ENCODE measurements at regions of chr12 and their contacts with region 1.

Region 1: GRCh38 chr12:8078398-8078797 is 3.7 kb upstream of the NECAP1 start:
- DNase-seq: peak; percentile 63
- H3K4me3 ChIP-seq: no peak overlapping the region
- H3K27ac ChIP-seq: no peak overlapping the region
- H3K27me3 ChIP-seq: no peaks in the 10 kb centered on the region
- CTCF ChIP-seq: peak; percentile 63

Region 2: DNA sequence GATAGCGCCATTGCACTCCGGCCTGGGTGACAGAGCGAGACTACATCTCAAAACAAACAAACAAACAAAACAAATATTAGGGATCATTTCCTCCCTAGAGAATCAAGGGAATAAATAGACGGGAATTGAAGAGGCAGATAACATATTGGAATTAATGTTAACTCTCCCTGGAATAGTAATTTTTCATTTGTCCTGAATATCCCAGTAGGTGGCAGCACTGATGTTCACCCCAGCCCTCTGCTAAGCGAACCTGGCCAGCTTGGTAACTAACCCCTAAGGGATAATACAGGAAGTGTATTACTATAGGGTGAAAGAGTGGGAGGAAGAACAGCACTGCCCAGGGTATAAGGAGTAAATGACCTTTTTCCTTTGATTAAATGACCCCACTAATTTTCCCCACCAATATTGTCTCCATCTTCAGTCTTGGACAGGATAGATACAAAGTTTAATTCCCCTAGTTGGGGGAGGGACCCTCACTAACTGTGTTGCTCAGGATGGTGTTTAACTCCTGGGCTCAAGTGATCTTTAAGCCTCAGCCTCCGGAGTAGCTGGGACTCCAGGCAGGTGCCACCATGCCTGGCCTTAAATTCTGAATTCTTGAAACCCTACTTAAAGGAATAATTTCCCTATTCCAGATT is 246.2 kb before region 1 on chr12:
- CTCF ChIA-PET with region 1: interaction called, 12 read pairs
- POLR2A ChIA-PET with region 1: no interaction called
- DNase-seq: peak; percentile 27
- H3K4me3 ChIP-seq: no peak overlapping the region
- H3K27ac ChIP-seq: no peak overlapping the region
- H3K27me3 ChIP-seq: no peaks in the 10 kb centered on the region
- CTCF ChIP-seq: peak; percentile 68

Region 3: DNA sequence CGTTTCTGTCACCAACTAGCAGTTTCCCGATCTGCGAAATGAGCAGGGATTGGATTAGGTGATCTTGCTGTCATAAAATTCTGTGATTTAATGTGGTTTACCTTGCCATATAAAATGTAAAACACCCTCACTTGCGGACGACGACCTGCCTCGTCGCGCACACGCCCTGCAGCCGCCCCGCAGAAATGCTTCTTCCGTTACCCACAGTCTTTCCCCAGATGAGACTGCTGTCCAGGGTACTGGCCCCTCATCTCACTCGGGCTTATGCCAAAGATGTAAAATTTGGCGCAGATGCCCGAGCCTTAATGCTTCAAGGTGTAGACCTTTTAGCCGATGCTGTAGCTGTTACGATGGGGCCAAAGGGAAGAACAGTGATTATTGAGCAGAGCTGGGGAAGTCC is 63.6 kb before region 1 on chr12:
- CTCF ChIA-PET with region 1: no interaction called
- POLR2A ChIA-PET with region 1: no interaction called
- DNase-seq: no peak
- H3K4me3 ChIP-seq: no peak overlapping the region
- H3K27ac ChIP-seq: no peak overlapping the region
- H3K27me3 ChIP-seq: peaks cover 18% of the 10 kb centered on the region
- CTCF ChIP-seq: no peak

Region 4: DNA sequence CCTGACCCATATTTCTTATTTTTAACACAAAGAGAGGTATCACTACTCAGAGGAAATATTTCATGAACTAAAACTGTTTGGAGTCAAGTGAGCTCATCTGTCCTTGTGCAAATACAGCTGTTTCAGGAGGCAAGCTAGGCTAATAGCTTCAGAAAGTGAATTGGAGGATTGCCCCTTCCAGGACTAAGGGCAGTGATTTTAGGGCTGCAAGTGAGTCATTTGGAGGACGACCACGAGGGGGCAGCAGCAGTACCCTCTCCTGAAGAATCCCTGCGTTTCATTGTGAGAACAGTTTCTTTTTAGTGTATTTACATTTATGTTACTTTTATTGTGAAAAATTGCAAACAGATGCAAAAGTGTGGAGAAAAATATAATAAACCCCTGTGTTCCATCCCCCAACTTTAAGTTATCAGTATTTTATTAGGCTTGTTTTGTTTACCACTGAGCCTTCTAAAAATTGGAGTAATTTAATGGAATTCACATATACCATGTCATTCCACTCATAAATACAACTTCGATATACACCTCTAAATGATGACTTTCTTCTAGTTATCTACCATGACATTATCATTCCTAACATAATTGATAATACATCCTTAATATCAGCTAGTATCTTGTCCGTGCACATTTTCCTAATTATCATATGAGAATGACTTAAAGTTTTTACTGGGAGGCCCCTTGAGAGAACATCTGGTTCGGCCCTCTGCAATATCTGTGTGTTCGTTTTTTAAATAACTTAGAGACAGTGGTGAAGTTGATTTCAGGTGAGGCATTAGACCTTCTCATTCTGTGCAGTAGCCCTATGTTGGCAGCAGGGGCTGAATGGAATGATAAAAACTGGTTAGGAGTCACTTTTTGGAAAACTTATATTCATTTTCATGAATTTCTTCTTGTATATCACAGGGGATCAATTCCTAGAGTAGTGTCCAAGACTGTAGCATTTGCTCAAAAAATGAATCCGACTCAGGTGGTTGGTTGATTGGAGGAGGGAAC is 32.1 kb before region 1 on chr12:
- CTCF ChIA-PET with region 1: interaction called, 113 read pairs
- POLR2A ChIA-PET with region 1: no interaction called
- DNase-seq: peak; percentile 82
- H3K4me3 ChIP-seq: no peak overlapping the region
- H3K27ac ChIP-seq: no peak overlapping the region
- H3K27me3 ChIP-seq: no peaks in the 10 kb centered on the region
- CTCF ChIP-seq: peak; percentile 94

Region 5: DNA sequence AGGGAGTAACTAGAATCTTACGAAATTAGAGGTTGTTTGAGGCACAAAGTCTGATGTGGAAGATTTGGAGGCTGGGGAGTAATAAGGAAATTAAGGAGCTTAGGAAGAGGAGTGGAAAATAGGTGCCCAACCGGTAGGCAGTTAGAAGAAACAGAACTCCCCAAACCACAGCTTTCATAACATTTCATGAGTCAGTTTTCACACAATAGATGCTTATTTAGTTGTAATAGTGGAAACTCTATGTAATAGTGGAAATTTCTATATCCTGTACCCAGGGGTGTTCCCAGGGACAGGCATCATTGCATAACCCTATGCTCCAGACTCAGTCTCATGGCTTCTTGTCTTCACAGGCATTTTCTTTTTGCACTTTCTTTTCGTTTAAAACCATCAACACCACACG is 20.6 kb before region 1 on chr12:
- CTCF ChIA-PET with region 1: interaction called, 15 read pairs
- POLR2A ChIA-PET with region 1: interaction called, 3 read pairs
- DNase-seq: no peak
- H3K4me3 ChIP-seq: no peak overlapping the region
- H3K27ac ChIP-seq: no peak overlapping the region
- H3K27me3 ChIP-seq: no peaks in the 10 kb centered on the region
- CTCF ChIP-seq: no peak

Region 6: GRCh38 chr12:8065991-8066594 is 12.3 kb before region 1 on chr12 and contains the start of gene C3AR1:
- CTCF ChIA-PET with region 1: interaction called, 10 read pairs
- POLR2A ChIA-PET with region 1: interaction called, 4 read pairs
- DNase-seq: no peak
- H3K4me3 ChIP-seq: no peak within 1 kb of the TSS
- H3K27ac ChIP-seq: no peak within 1 kb of the TSS
- H3K27me3 ChIP-seq: no peaks in the 10 kb centered on the region
- CTCF ChIP-seq: no peak
- polyA plus RNA-seq, gene C3AR1: 0.52 and 0.71 TPM in 2 replicates

Region 7: GRCh38 chr12:8226355-8226754 is 148.0 kb after region 1 on chr12:
- CTCF ChIA-PET with region 1: interaction called, 15 read pairs
- POLR2A ChIA-PET with region 1: no interaction called
- DNase-seq: no peak
- H3K4me3 ChIP-seq: no peak overlapping the region
- H3K27ac ChIP-seq: no peak overlapping the region
- H3K27me3 ChIP-seq: no peaks in the 10 kb centered on the region
- CTCF ChIP-seq: no peak

Measured in AG04450 (cell line).